GM12878 (cell line): ENCODE measurements at regions of chr10 and their contacts with region 1.

Region 1: DNA sequence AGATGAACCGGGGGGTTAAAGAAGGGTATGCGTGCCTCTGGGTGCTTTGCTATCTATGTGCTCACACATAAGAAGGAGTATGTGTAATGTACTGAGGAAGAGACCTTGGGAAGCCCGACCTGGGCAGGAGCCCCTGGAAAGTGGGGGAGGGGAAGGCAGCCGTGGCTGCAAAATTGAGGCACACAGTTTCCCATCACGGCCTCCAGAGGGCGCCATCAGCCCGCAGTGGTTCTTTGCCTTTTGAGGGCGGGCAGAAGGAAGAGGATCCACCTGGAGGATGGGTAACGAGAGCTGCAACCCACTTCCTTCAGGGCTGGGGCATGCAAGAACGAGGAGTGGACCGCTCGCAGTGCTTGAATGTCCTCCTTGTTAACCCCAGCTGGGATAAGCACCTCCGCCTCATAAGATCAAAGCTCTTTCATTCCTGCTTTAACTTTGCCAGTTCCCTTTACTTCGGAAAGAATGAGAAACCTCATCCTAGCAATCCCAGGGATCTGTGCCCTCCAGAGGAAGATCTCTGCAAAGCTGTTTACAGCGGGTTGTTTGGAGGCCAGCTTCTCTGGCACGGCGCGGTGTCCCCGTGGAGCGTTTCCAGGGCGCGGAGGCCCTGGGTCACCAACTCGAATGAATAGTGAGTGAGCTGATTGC is 77.9 kb downstream of the PCGF5 start:
- DNase-seq: no peak
- ATAC-seq: peak; percentile 93
- H3K4me3 ChIP-seq: peak overlapping the region; percentile 46; the same call in 1 of the 2 replicates
- H3K27ac ChIP-seq: no peak overlapping the region
- H3K4me1 ChIP-seq: peaks cover 5% of the 10 kb centered on the region; the same call in 1 of the 2 replicates
- H3K27me3 ChIP-seq: no peaks in the 10 kb centered on the region
- CTCF ChIP-seq: peak; percentile 90 to 97 (median 90)
- EP300 ChIP-seq: no peak
- POLR2A ChIP-seq: no peak
- RAD21 ChIP-seq: peak; percentile 93

Region 2: GRCh38 chr10:91287276-91287675 is 11.1 kb before region 1 on chr10:
- CTCF ChIA-PET with region 1: interaction called, 24 read pairs
- POLR2A ChIA-PET with region 1: no interaction called
- RAD21 ChIA-PET with region 1: no interaction called
- SMC1A ChIA-PET with region 1: interaction called, 3 read pairs
- in situ Hi-C with region 1: no loop called
- intact Hi-C with region 1: no loop called
- DNase-seq: no peak
- ATAC-seq: no peak
- H3K4me3 ChIP-seq: no peak overlapping the region
- H3K27ac ChIP-seq: no peak overlapping the region
- H3K4me1 ChIP-seq: no peaks in the 10 kb centered on the region
- H3K27me3 ChIP-seq: no peaks in the 10 kb centered on the region
- CTCF ChIP-seq: no peak
- EP300 ChIP-seq: no peak
- POLR2A ChIP-seq: no peak
- RAD21 ChIP-seq: no peak

Region 3: DNA sequence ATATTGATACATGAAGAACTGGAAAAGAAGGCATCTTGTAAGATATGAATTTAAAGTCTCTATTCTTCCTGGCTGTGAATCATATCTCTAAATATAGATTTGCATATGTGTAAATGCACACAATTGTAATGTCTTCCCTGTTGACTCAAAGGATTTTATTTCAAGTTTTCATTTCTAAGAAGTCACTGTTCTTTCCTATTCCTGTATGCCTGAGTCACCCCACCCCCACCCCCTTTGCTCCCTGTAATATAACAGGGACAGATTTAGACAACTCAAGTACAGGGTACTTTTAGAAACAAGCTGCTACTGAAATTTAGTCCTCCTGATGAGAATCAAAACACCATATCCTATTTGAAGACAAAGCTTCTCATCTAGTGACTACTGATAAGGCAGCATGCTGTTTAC is 68.8 kb after region 1 on chr10:
- CTCF ChIA-PET with region 1: interaction called, 12 read pairs
- POLR2A ChIA-PET with region 1: no interaction called
- RAD21 ChIA-PET with region 1: interaction called, 3 read pairs
- SMC1A ChIA-PET with region 1: interaction called, 7 read pairs
- in situ Hi-C with region 1: no loop called
- intact Hi-C with region 1: loop called (anchors 5 kb)
- DNase-seq: no peak
- ATAC-seq: no peak
- H3K4me3 ChIP-seq: no peak overlapping the region
- H3K27ac ChIP-seq: no peak overlapping the region
- H3K4me1 ChIP-seq: no peaks in the 10 kb centered on the region
- H3K27me3 ChIP-seq: no peaks in the 10 kb centered on the region
- CTCF ChIP-seq: no peak
- EP300 ChIP-seq: no peak
- POLR2A ChIP-seq: no peak
- RAD21 ChIP-seq: no peak

Region 4: GRCh38 chr10:91632671-91633550 is 334.6 kb after region 1 on chr10 and contains the start of gene PPP1R3C:
- CTCF ChIA-PET with region 1: interaction called, 39 read pairs
- POLR2A ChIA-PET with region 1: interaction called, 3 read pairs
- RAD21 ChIA-PET with region 1: interaction called, 29 read pairs
- SMC1A ChIA-PET with region 1: interaction called, 21 read pairs
- in situ Hi-C with region 1: no loop called
- intact Hi-C with region 1: loop called (anchors 1 kb)
- DNase-seq: no peak
- ATAC-seq: peak; percentile 43
- H3K4me3 ChIP-seq: peak within 1 kb of the TSS; percentile 36; the same call in 1 of the 2 replicates
- H3K27ac ChIP-seq: no peak within 1 kb of the TSS
- H3K4me1 ChIP-seq: no peaks in the 10 kb centered on the region
- H3K27me3 ChIP-seq: peaks cover 3 to 7% of the 10 kb centered on the region in 2 experiments; a peak in 3 of 4 replicates
- CTCF ChIP-seq: 0 out of 6 replicates have a peak, but pooled peaks of 1 of the 3 experiments have one; percentile 4
- EP300 ChIP-seq: no peak
- POLR2A ChIP-seq: no peak
- RAD21 ChIP-seq: no peak
- polyA plus RNA-seq, gene PPP1R3C: not detected

Region 5: DNA sequence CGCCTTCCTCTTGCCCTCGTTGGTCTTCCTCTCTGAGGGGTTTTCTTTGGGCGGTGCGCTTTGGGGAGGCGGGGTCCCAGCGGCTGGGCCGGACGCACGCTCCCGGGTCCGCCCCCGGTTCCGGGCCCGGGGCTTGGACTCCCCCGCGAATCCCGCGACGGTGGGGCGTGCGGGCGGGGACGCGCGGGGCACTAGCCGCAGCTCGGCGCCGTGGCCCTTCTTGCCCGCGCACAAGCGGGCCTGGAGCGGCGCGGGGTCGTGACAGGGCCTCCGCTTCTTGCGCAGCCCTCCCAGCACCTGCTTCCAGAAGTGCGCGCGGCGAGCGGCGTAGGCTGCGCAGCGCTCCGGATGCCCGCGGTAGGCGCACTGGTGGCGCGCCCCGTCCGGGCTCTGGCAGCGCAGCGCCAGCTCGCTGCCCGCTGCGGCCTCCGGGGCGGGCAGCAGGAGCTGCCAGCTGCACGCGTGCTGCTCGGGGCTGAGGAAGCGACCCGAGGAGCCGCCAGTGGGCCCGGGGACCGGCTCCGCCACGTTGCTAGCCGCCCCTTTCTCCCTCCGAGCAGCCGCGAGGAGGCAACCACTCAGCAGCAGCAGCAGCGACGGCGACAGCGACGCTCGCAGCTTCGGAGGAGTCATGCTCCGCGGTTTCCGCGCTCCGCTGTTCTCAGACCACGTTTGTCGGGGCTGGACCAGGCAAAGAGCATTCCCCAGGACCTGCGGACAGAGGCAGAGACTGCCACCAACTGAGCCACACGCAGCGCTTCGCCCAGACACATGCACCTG is 610.2 kb after region 1 on chr10:
- CTCF ChIA-PET with region 1: interaction called, 17 read pairs
- POLR2A ChIA-PET with region 1: no interaction called
- RAD21 ChIA-PET with region 1: interaction called, 8 read pairs
- SMC1A ChIA-PET with region 1: interaction called, 4 read pairs
- in situ Hi-C with region 1: no loop called
- intact Hi-C with region 1: no loop called
- DNase-seq: peak; percentile 48
- ATAC-seq: peak; percentile 95
- H3K4me3 ChIP-seq: peak overlapping the region; percentile 82
- H3K27ac ChIP-seq: no peak overlapping the region
- H3K4me1 ChIP-seq: no peaks in the 10 kb centered on the region; the same call in 1 of the 2 replicates
- H3K27me3 ChIP-seq: no peaks in the 10 kb centered on the region; a peak in 1 of 4 replicates
- CTCF ChIP-seq: peak; percentile 45 to 62 (median 53)
- EP300 ChIP-seq: no peak
- POLR2A ChIP-seq: no peak; the same call in none of the 2 replicates
- RAD21 ChIP-seq: 0 out of 2 replicates have a peak, but pooled peaks have one; percentile 7